ENCODE measurements at regions of chr12 and their contacts with region 1.

Region 1: GRCh38 chr12:108562348-108563135 is at the start of gene ISCU:
- DNase-seq: peak; percentile 99 to 100
- ATAC-seq: peak; percentile 95
- H3K4me3 ChIP-seq: peak within 1 kb of the TSS; percentile 60 to 88
- H3K27ac ChIP-seq: peak within 1 kb of the TSS in 1 of 2 donors; percentile 87
- H3K4me1 ChIP-seq: peaks cover 0 to 9% of the 10 kb centered on the region in 2 donors
- H3K27me3 ChIP-seq: no peaks in the 10 kb centered on the region
- total RNA-seq, gene ISCU: 129 to 144 TPM

Region 2: GRCh38 chr12:108618079-108618952 is 55.8 kb after region 1 on chr12:
- intact Hi-C with region 1: loop called (anchors 2 to 5 kb)
- DNase-seq: peak; percentile 86 to 93
- ATAC-seq: peak; percentile 85
- H3K4me3 ChIP-seq: no peak overlapping the region
- H3K27ac ChIP-seq: no peak overlapping the region
- H3K4me1 ChIP-seq: no peaks in the 10 kb centered on the region
- H3K27me3 ChIP-seq: no peaks in the 10 kb centered on the region

Measured in aorta (tissue), 5 donors.